Activated CD4-positive, alpha-beta memory T cell treated with anti-CD3 and anti-CD28 coated beads, Interleukin-2, amount 10 ng/mL, durations not matched to agents 7 days and 5 days (primary cell): ENCODE measurements at regions of chr4 and their contacts with region 1.

Region 1: DNA sequence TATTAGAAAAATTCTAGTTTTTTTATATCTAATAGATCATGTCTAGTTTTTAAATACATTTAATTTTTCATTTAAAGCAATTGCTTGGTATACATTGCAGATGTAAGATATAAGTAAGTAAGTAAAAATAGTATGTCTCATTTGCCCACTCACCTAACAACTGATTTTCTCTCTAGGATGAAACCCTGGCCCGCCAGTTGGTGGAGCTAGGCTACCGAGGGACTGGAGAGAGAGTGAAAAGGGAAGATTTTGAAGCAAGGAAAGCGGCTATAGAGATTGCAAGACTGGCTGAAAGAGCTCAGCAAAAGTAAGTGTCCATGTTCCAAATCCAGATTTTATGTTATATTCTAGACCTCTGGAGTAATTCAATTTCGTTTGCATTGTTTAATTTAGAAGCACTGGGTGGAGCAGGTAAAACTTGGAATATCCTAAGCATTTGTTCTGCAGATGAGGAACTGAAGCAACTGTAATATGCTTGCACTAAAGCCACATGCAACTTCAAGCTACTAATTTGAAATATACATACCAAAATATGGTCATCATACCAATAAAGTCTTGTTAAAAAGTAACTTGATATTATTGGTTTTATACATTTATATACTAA is 27.1 kb downstream of the CFAP299 start:
- DNase-seq: peak; percentile 58
- H3K4me3 Mint-ChIP-seq: no peak overlapping the region
- H3K27ac Mint-ChIP-seq: no peak overlapping the region
- H3K4me1 Mint-ChIP-seq: no peaks in the 10 kb centered on the region
- H3K27me3 Mint-ChIP-seq: peaks cover 21% of the 10 kb centered on the region

Region 2: DNA sequence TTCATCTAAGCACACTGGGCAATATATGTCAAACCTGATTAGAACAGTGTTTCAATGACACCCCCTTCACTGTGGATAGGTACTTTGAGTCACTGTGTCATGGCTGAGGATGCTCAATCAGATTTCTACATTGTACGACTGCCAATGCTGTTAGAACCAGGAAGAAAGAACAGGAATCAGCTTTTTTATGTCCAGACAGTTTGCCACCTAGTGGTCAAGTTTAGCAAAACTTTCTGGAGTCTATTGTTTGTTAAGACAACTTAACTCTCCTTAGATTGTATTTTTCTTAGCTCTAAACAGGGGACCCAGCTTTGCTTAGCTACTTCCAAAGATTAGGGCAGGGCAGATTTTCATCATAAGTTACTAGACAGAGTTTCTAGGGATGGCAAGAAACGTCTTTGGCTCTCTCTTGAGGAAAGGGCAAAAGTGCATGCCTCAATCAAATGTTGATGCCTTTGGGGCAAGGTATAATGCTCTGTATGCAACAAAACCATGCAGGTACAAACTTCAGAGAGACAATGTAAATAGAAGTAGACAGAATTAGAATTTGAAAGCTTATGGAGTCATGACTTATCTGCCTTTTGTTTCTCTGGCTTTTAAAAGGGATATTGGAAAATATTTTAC is 627.4 kb after region 1 on chr4:
- CTCF ChIA-PET with region 1: interaction called, 16 read pairs
- POLR2A ChIA-PET with region 1: no interaction called
- DNase-seq: no peak
- H3K4me3 Mint-ChIP-seq: no peak overlapping the region
- H3K27ac Mint-ChIP-seq: no peak overlapping the region
- H3K4me1 Mint-ChIP-seq: no peaks in the 10 kb centered on the region
- H3K27me3 Mint-ChIP-seq: no peaks in the 10 kb centered on the region

Region 3: GRCh38 chr4:81040012-81040659 is 677.5 kb after region 1 on chr4:
- CTCF ChIA-PET with region 1: interaction called, 13 read pairs
- POLR2A ChIA-PET with region 1: no interaction called
- DNase-seq: no peak
- H3K4me3 Mint-ChIP-seq: no peak overlapping the region
- H3K27ac Mint-ChIP-seq: no peak overlapping the region
- H3K4me1 Mint-ChIP-seq: no peaks in the 10 kb centered on the region
- H3K27me3 Mint-ChIP-seq: peaks cover 32% of the 10 kb centered on the region